Naive thymus-derived CD4-positive, alpha-beta T cell (primary cell): ENCODE measurements at regions of chr2 and their contacts with region 1.

Region 1: DNA sequence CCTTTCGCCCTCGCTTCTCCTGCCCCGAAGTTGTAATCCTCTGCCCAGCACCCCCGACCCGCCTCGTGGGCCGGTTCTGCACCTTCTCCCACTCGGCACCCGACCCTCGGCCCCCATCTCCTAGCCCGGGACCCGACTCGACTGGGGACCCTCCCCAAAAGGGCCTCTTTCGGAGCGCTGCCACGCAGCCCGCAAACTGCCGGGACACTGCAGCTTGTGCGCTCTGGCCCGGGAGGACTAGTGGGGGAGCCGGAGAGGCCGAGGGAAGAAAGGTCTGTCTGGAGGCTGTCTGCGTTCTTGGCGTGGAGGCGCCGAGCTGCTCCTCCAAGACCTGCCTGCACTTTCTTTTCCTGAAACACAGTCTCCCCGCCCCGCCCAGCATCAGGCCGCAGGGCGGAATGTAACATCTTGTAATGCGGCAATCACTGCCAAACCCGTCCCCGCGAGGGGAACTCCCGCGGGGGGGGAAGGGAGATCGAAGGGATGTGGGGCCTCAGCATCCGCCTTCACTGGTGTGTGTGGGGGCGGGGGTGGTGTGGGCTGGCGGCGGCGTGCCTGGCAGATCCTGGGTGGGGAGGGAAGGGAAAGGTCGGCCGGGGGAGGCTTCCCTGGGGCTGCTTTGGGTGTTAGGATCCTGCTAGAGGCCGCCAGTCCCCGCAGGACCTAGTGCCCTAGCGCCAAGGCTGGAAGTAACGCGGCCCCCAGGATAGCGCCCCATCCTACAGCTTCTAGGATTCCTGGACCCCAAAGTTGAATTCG is 7.4 kb downstream of the DLX2 start:
- DNase-seq: peak in 7 of 9 donors; percentile 77 to 86 (median 83)
- ATAC-seq: peak; percentile 89
- H3K4me3 ChIP-seq: peak overlapping the region; percentile 27
- H3K4me3 Mint-ChIP-seq: peak overlapping the region; percentile 81 to 88 (median 86)
- H3K27ac ChIP-seq: no peak overlapping the region
- H3K27ac Mint-ChIP-seq: peak overlapping the region in 7 of 9 donors; percentile 34 to 89 (median 78)
- H3K4me1 ChIP-seq: peaks cover 29 to 52% of the 10 kb centered on the region in 2 donors
- H3K4me1 Mint-ChIP-seq: peaks cover 17 to 50% (median 37%) of the 10 kb centered on the region in 7 donors
- H3K27me3 ChIP-seq: peaks cover 54 to 92% of the 10 kb centered on the region in 2 donors
- H3K27me3 Mint-ChIP-seq: peaks cover 68 to 86% (median 74%) of the 10 kb centered on the region in 5 donors

Region 2: GRCh38 chr2:170822290-170823087 is 1272.8 kb before region 1 on chr2:
- CTCF ChIA-PET with region 1: no interaction called
- POLR2A ChIA-PET with region 1: no interaction called
- intact Hi-C with region 1: loop called in 1 of 2 experiments (anchors 5 kb)
- DNase-seq: peak in 4 of 9 donors; percentile 22 to 52 (median 35)
- ATAC-seq: peak; percentile 43
- H3K4me3 ChIP-seq: peak overlapping the region; percentile 57
- H3K4me3 Mint-ChIP-seq: peak overlapping the region; percentile 54 to 94 (median 81)
- H3K27ac ChIP-seq: no peak overlapping the region
- H3K27ac Mint-ChIP-seq: peak overlapping the region in 1 of 9 donors; percentile 14
- H3K4me1 ChIP-seq: peaks cover 35 to 47% of the 10 kb centered on the region in 2 donors
- H3K4me1 Mint-ChIP-seq: peaks cover 25 to 63% (median 47%) of the 10 kb centered on the region in 7 donors
- H3K27me3 ChIP-seq: peaks cover 21 to 33% of the 10 kb centered on the region in 2 donors
- H3K27me3 Mint-ChIP-seq: peaks cover 82 to 89% (median 88%) of the 10 kb centered on the region in 5 donors

Region 3: GRCh38 chr2:172084734-172085459 is 10.4 kb before region 1 on chr2:
- CTCF ChIA-PET with region 1: interaction called, 4 read pairs
- POLR2A ChIA-PET with region 1: interaction called, 21 read pairs
- intact Hi-C with region 1: loop called (anchors 1 kb)
- DNase-seq: peak in 5 of 9 donors; percentile 37 to 57 (median 52)
- ATAC-seq: peak; percentile 81
- H3K4me3 ChIP-seq: peak overlapping the region; percentile 15
- H3K4me3 Mint-ChIP-seq: peak overlapping the region; percentile 70 to 85 (median 78)
- H3K27ac ChIP-seq: no peak overlapping the region
- H3K27ac Mint-ChIP-seq: peak overlapping the region in 8 of 9 donors; percentile 14 to 91 (median 84)
- H3K4me1 ChIP-seq: peaks cover 50 to 51% of the 10 kb centered on the region in 2 donors
- H3K4me1 Mint-ChIP-seq: peaks cover 36 to 74% (median 58%) of the 10 kb centered on the region in 7 donors
- H3K27me3 ChIP-seq: peaks cover 81 to 96% of the 10 kb centered on the region in 2 donors
- H3K27me3 Mint-ChIP-seq: peaks cover 80 to 98% (median 88%) of the 10 kb centered on the region in 5 donors